PC-3 (cell line): ENCODE measurements at regions of chr16 and their contacts with region 1.

Region 1: DNA sequence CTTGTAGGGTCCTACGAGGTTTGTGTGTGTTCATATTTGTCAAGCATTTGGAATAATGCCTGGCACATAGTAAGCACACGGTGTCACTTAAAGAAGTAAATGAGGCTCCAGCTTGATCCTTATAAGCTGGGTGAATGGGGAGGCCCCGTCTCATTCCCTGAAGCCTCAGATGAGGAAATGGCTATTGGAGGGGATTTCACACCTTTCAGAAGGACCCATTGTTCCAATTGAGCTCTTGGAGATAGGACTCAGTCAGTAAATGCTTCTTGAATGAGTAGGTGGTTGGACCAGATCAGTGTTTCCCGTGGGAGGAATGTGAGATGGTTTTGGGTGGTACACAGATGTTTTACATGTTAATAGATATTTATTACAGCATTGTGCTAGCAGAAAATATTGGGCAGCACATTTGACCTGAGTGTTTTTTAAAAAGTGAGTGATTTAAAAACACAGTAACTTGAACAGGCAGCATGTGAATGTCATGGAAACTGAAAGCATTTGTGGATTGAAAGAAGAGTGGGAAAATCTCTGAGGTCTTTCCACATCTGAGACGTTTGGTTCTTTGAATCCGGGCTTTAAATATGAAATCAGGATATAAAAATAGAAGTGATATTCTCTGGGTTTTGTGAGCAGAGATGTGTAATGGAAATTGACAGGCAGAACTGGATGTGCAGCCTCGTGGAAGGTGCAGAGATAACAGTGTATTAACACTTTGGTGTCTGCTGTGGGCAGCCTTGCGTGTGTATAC is 36.4 kb upstream of the ARHGAP17 start:
- DNase-seq: peak; percentile 13
- ATAC-seq: no peak
- H3K4me3 ChIP-seq: peak overlapping the region; percentile 40; the same call in 1 of the 2 replicates
- H3K27ac ChIP-seq: peak overlapping the region; percentile 25
- H3K4me1 ChIP-seq: peaks cover 34% of the 10 kb centered on the region
- H3K27me3 ChIP-seq: no peaks in the 10 kb centered on the region
- CTCF ChIP-seq: no peak

Region 2: GRCh38 chr16:24975428-24975889 is 76.1 kb before region 1 on chr16:
- CTCF ChIA-PET with region 1: no interaction called
- POLR2A ChIA-PET with region 1: no interaction called
- intact Hi-C with region 1: loop called (anchors 1 kb)
- DNase-seq: no peak
- ATAC-seq: no peak
- H3K4me3 ChIP-seq: no peak overlapping the region
- H3K27ac ChIP-seq: no peak overlapping the region
- H3K4me1 ChIP-seq: peaks cover 17% of the 10 kb centered on the region
- H3K27me3 ChIP-seq: no peaks in the 10 kb centered on the region
- CTCF ChIP-seq: no peak

Region 3: GRCh38 chr16:25014500-25015147 is 37.0 kb before region 1 on chr16:
- CTCF ChIA-PET with region 1: no interaction called
- POLR2A ChIA-PET with region 1: interaction called, 4 read pairs
- intact Hi-C with region 1: loop called (anchors 1 kb)
- DNase-seq: peak; percentile 39
- ATAC-seq: peak; percentile 37
- H3K4me3 ChIP-seq: peak overlapping the region; percentile 99
- H3K27ac ChIP-seq: peak overlapping the region; percentile 99
- H3K4me1 ChIP-seq: peaks cover 42% of the 10 kb centered on the region
- H3K27me3 ChIP-seq: no peaks in the 10 kb centered on the region
- CTCF ChIP-seq: no peak

Region 4: GRCh38 chr16:25126820-25127232 is 75.2 kb after region 1 on chr16:
- CTCF ChIA-PET with region 1: no interaction called
- POLR2A ChIA-PET with region 1: no interaction called
- intact Hi-C with region 1: loop called (anchors 2 kb)
- DNase-seq: peak; percentile 82
- ATAC-seq: peak; percentile 97
- H3K4me3 ChIP-seq: no peak overlapping the region
- H3K27ac ChIP-seq: peak overlapping the region; percentile 33
- H3K4me1 ChIP-seq: peaks cover 16% of the 10 kb centered on the region
- H3K27me3 ChIP-seq: no peaks in the 10 kb centered on the region
- CTCF ChIP-seq: peak; percentile 75

Region 5: GRCh38 chr16:25192096-25192495 is 140.5 kb after region 1 on chr16:
- CTCF ChIA-PET with region 1: no interaction called
- POLR2A ChIA-PET with region 1: no interaction called
- intact Hi-C with region 1: no loop called
- DNase-seq: no peak
- ATAC-seq: no peak
- H3K4me3 ChIP-seq: no peak overlapping the region
- H3K27ac ChIP-seq: no peak overlapping the region
- H3K4me1 ChIP-seq: no peaks in the 10 kb centered on the region; the same call in 1 of the 2 replicates
- H3K27me3 ChIP-seq: no peaks in the 10 kb centered on the region
- CTCF ChIP-seq: no peak

Region 6: DNA sequence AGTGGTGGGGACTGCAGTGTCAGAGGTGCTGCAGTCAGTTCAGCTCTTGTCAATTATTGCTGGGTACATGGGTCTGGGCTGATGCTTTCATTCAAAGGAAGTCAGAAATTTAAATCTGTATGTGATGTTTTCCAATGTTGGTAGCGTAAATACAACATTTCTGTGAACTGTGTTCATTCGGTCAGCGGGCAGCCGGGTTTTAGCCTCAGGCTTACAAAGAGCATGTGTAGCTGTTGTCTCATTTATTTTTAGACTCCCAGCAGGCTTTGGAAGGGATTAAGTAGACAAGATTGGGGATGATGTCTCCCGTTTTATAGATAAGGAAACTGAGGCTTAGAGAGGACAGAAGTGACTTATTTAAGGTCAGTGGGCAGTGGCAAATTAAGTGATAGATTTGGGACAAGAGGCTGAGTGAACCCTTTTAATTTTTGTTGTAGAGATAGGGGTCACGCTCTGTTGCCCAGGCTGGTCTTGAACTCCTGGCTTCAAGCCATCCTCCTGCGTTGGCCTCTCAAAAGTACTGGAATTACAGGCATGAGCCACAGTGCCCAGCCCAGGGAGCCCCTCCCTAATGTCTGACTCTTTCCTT is 173.2 kb after region 1 on chr16:
- CTCF ChIA-PET with region 1: interaction called, 6 read pairs
- POLR2A ChIA-PET with region 1: no interaction called
- intact Hi-C with region 1: loop called (anchors 1 kb)
- DNase-seq: no peak
- ATAC-seq: no peak
- H3K4me3 ChIP-seq: no peak overlapping the region
- H3K27ac ChIP-seq: no peak overlapping the region
- H3K4me1 ChIP-seq: no peaks in the 10 kb centered on the region
- H3K27me3 ChIP-seq: no peaks in the 10 kb centered on the region
- CTCF ChIP-seq: no peak